CD4-positive, alpha-beta T cell (primary cell): ENCODE measurements at regions of chr1 and their contacts with region 1.

Region 1: GRCh38 chr1:168342572-168343280 is 62.0 kb downstream of the TBX19 start:
- DNase-seq: peak; percentile 83 to 96 (median 86)
- ATAC-seq: peak; percentile 99
- H3K4me3 ChIP-seq: no peak overlapping the region
- H3K4me3 Mint-ChIP-seq: peak overlapping the region; percentile 61
- H3K27ac ChIP-seq: no peak overlapping the region
- H3K27ac Mint-ChIP-seq: peak overlapping the region; percentile 90
- H3K4me1 ChIP-seq: peaks cover 19% of the 10 kb centered on the region
- H3K4me1 Mint-ChIP-seq: peaks cover 34% of the 10 kb centered on the region
- H3K27me3 ChIP-seq: no peaks in the 10 kb centered on the region
- H3K27me3 Mint-ChIP-seq: no peaks in the 10 kb centered on the region
- CTCF ChIP-seq: peak; percentile 83

Region 2: DNA sequence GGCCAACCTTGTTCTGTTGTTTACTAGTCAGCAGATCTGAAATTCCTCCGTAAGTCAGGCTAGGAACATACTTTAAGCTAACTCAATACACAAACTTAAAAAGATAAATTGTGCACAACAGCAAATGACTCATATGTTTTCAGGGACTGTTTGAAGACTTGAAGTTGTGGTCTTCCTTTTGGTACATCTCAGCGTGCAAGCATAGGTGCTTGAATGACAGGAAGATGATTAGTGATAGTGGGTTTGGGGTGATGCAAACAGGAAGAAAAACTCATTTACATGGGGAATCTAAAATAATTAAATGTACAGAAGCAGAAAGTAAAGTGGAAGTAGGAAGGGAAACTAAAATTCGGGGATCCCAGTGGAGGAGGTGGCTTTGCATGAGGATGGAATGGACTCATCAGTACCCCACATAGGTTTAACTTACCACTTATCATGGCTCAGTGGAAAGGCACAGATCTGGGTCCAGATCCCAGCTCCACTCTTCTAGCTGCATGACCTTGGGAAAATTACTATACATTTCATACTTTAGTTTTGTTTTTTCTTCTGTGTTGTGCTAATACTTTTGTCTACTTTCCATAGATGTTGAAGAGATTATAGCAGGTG is 78.8 kb after region 1 on chr1:
- CTCF ChIA-PET with region 1: interaction called, 12 read pairs
- POLR2A ChIA-PET with region 1: interaction called, 6 read pairs
- intact Hi-C with region 1: no loop called
- DNase-seq: peak in 6 of 14 experiments; percentile 13 to 83 (median 42)
- ATAC-seq: peak; percentile 87
- H3K4me3 ChIP-seq: peak overlapping the region; percentile 11
- H3K4me3 Mint-ChIP-seq: peak overlapping the region; percentile 16
- H3K27ac ChIP-seq: peak overlapping the region in 1 of 2 donors; percentile 56
- H3K27ac Mint-ChIP-seq: peak overlapping the region; percentile 66
- H3K4me1 ChIP-seq: peaks cover 28% of the 10 kb centered on the region
- H3K4me1 Mint-ChIP-seq: peaks cover 17% of the 10 kb centered on the region
- H3K27me3 ChIP-seq: no peaks in the 10 kb centered on the region
- H3K27me3 Mint-ChIP-seq: no peaks in the 10 kb centered on the region
- CTCF ChIP-seq: no peak

Region 3: GRCh38 chr1:168572633-168573032 is 229.9 kb after region 1 on chr1:
- CTCF ChIA-PET with region 1: interaction called, 3 read pairs
- POLR2A ChIA-PET with region 1: interaction called, 3 read pairs
- intact Hi-C with region 1: loop called (anchors 1 kb)
- DNase-seq: no peak
- ATAC-seq: no peak
- H3K4me3 ChIP-seq: no peak overlapping the region
- H3K4me3 Mint-ChIP-seq: no peak overlapping the region
- H3K27ac ChIP-seq: no peak overlapping the region
- H3K27ac Mint-ChIP-seq: no peak overlapping the region
- H3K4me1 ChIP-seq: peaks cover 4% of the 10 kb centered on the region
- H3K4me1 Mint-ChIP-seq: peaks cover 11% of the 10 kb centered on the region
- H3K27me3 ChIP-seq: no peaks in the 10 kb centered on the region
- H3K27me3 Mint-ChIP-seq: no peaks in the 10 kb centered on the region
- CTCF ChIP-seq: no peak

Region 4: GRCh38 chr1:169348383-169349036 is 1005.8 kb after region 1 on chr1:
- CTCF ChIA-PET with region 1: interaction called, 16 read pairs
- POLR2A ChIA-PET with region 1: interaction called, 10 read pairs
- intact Hi-C with region 1: loop called (anchors 1 to 2 kb)
- DNase-seq: peak in 4 of 14 experiments; percentile 38 to 79 (median 68)
- ATAC-seq: peak; percentile 46
- H3K4me3 ChIP-seq: no peak overlapping the region
- H3K4me3 Mint-ChIP-seq: no peak overlapping the region
- H3K27ac ChIP-seq: no peak overlapping the region
- H3K27ac Mint-ChIP-seq: no peak overlapping the region
- H3K4me1 ChIP-seq: no peaks in the 10 kb centered on the region
- H3K4me1 Mint-ChIP-seq: no peaks in the 10 kb centered on the region
- H3K27me3 ChIP-seq: no peaks in the 10 kb centered on the region
- H3K27me3 Mint-ChIP-seq: no peaks in the 10 kb centered on the region
- CTCF ChIP-seq: peak; percentile 92